ENCODE measurements at regions of chr15 and their contacts with region 1.

Region 1: GRCh38 chr15:85296615-85297402 is 83.6 kb upstream of the AKAP13 start:
- DNase-seq: peak; percentile 40
- ATAC-seq: peak; percentile 99
- H3K4me3 Mint-ChIP-seq: peak overlapping the region; percentile 76
- H3K27ac Mint-ChIP-seq: peak overlapping the region; percentile 48
- H3K4me1 Mint-ChIP-seq: peaks cover 23% of the 10 kb centered on the region
- H3K27me3 Mint-ChIP-seq: no peaks in the 10 kb centered on the region
- CTCF ChIP-seq: peak; percentile 80

Region 2: DNA sequence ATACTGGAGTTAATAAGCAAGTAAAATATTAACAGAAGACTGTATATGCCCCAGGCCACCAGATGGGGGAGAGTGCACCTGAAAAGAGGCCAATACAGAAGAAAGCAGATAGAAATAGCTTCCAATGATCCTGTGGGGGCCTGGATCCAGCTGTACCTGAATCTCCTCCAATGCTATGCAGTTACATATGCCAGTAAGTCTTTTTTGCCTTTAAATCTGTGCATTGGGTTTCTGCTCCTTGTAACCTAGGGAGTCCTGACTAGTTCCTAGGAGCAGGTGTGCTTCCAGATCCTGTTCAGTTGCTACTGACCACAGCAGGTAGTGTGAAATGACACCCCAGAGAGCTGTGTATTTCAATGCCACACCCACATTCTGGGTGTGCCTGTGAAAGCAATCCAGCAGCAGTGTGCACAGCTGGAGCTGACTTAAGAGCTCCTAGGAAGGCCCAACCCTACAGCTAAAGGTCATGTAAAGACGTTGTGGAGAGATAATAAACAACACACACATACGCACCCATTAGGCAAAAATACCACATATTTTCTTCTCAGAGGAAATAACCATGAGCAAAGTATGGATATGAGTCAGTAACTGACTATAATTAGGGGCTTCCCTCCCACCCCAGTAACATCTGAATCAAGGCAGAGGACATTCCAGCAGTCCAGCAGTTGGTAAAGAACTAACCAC is 21.4 kb after region 1 on chr15:
- CTCF ChIA-PET with region 1: interaction called, 23 read pairs
- POLR2A ChIA-PET with region 1: interaction called, 13 read pairs
- intact Hi-C with region 1: loop called (anchors 1 kb)
- DNase-seq: no peak
- ATAC-seq: peak; percentile 87
- H3K4me3 Mint-ChIP-seq: peak overlapping the region; percentile 69
- H3K27ac Mint-ChIP-seq: peak overlapping the region; percentile 87
- H3K4me1 Mint-ChIP-seq: peaks cover 74% of the 10 kb centered on the region
- H3K27me3 Mint-ChIP-seq: no peaks in the 10 kb centered on the region
- CTCF ChIP-seq: no peak

Region 3: GRCh38 chr15:85412956-85413854 is 116.4 kb after region 1 on chr15:
- CTCF ChIA-PET with region 1: interaction called, 218 read pairs
- POLR2A ChIA-PET with region 1: interaction called, 43 read pairs
- intact Hi-C with region 1: loop called (anchors 1 kb)
- DNase-seq: peak; percentile 50
- ATAC-seq: peak; percentile 94
- H3K4me3 Mint-ChIP-seq: peak overlapping the region; percentile 48
- H3K27ac Mint-ChIP-seq: peak overlapping the region; percentile 87
- H3K4me1 Mint-ChIP-seq: peaks cover 73% of the 10 kb centered on the region
- H3K27me3 Mint-ChIP-seq: no peaks in the 10 kb centered on the region
- CTCF ChIP-seq: no peak

Region 4: DNA sequence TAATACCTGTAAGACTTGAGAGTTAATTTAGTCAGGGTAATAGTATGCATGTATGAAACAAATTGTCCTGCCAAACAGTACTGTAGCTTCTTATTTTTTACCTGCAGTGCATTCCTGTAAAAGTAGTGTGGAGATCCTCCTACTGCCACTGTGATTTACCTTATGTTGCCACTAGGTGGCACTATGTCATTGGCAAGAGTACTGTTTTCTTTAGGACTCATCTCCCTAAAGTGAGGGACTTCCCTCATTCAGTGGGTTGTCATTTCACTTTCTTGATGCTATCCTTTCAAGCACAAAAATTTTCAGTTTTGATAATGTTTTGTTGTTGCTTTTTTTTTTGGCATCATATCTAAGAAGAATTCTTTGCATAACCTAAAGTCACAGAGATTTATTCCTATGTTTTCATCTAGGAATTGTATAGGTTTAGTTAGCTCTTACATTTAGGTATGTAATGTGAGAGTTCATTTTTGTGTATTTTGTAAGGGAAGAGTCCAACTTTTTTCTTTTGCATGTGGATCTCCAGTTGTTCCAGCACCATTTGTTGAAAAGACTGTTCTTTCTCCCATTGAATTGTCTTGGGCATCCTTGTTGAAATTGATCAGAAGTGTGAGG is 189.3 kb after region 1 on chr15:
- CTCF ChIA-PET with region 1: interaction called, 16 read pairs
- POLR2A ChIA-PET with region 1: no interaction called
- intact Hi-C with region 1: loop called (anchors 2 kb)
- DNase-seq: no peak
- ATAC-seq: peak; percentile 90
- H3K4me3 Mint-ChIP-seq: no peak overlapping the region
- H3K27ac Mint-ChIP-seq: peak overlapping the region; percentile 64
- H3K4me1 Mint-ChIP-seq: peaks cover 75% of the 10 kb centered on the region
- H3K27me3 Mint-ChIP-seq: no peaks in the 10 kb centered on the region
- CTCF ChIP-seq: peak; percentile 72

Region 5: GRCh38 chr15:85582131-85583079 is 285.6 kb after region 1 on chr15:
- CTCF ChIA-PET with region 1: interaction called, 6 read pairs
- POLR2A ChIA-PET with region 1: interaction called, 4 read pairs
- intact Hi-C with region 1: loop called (anchors 1 kb)
- DNase-seq: no peak
- ATAC-seq: peak; percentile 59
- H3K4me3 Mint-ChIP-seq: peak overlapping the region; percentile 83
- H3K27ac Mint-ChIP-seq: peak overlapping the region; percentile 90
- H3K4me1 Mint-ChIP-seq: peaks cover 76% of the 10 kb centered on the region
- H3K27me3 Mint-ChIP-seq: no peaks in the 10 kb centered on the region
- CTCF ChIP-seq: no peak